ENCODE measurements at regions of chr6 and their contacts with region 1.

Region 1: GRCh38 chr6:164085091-164086075 is 670.9 kb downstream of the QKI start:
- DNase-seq: peak; percentile 81
- H3K4me3 ChIP-seq: no peak overlapping the region
- H3K27ac ChIP-seq: peak overlapping the region; percentile 66
- H3K4me1 ChIP-seq: peaks cover 20% of the 10 kb centered on the region
- H3K27me3 ChIP-seq: no peaks in the 10 kb centered on the region
- CTCF ChIP-seq: no peak
- POLR2A ChIP-seq: no peak

Region 2: DNA sequence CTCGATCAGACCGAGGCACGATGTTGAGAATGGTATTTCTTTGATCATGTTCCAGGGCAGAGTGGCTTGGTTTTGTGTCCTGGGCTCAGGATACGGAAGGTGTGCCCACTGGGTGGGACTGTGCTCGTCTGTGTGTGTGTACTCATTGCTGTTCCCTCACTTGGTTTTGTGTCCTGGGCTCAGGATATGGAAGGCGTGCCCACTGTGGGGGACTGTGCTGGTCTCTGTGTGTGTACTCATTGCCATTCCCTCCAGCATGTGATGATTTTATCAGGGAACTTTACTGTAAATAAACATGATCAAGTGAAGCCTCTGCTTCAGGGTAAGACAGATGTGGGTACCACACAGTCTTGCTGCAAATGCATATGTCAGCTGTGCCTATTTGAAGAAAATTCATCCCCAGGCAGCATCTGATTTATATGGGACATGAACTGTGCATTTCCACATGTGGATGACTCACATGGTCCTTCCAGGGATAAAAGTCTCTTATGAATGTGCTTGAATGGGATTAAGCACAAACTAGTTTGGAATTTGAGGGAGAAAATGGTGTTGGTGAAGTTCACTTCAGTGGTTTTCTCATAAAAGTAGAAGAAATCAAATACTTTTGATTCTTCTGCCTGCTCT is 396.5 kb before region 1 on chr6:
- CTCF ChIA-PET with region 1: no interaction called
- POLR2A ChIA-PET with region 1: no interaction called
- dilution Hi-C with region 1: no loop called
- intact Hi-C with region 1: no loop called
- DNase-seq: no peak
- H3K4me3 ChIP-seq: no peak overlapping the region
- H3K27ac ChIP-seq: no peak overlapping the region
- H3K4me1 ChIP-seq: no peaks in the 10 kb centered on the region
- H3K27me3 ChIP-seq: no peaks in the 10 kb centered on the region
- CTCF ChIP-seq: no peak
- POLR2A ChIP-seq: no peak

Region 3: GRCh38 chr6:163897030-163897429 is 188.4 kb before region 1 on chr6:
- CTCF ChIA-PET with region 1: no interaction called
- POLR2A ChIA-PET with region 1: no interaction called
- dilution Hi-C with region 1: no loop called
- intact Hi-C with region 1: no loop called
- DNase-seq: no peak
- H3K4me3 ChIP-seq: no peak overlapping the region
- H3K27ac ChIP-seq: no peak overlapping the region
- H3K4me1 ChIP-seq: no peaks in the 10 kb centered on the region
- H3K27me3 ChIP-seq: no peaks in the 10 kb centered on the region
- CTCF ChIP-seq: no peak
- POLR2A ChIP-seq: no peak

Region 4: DNA sequence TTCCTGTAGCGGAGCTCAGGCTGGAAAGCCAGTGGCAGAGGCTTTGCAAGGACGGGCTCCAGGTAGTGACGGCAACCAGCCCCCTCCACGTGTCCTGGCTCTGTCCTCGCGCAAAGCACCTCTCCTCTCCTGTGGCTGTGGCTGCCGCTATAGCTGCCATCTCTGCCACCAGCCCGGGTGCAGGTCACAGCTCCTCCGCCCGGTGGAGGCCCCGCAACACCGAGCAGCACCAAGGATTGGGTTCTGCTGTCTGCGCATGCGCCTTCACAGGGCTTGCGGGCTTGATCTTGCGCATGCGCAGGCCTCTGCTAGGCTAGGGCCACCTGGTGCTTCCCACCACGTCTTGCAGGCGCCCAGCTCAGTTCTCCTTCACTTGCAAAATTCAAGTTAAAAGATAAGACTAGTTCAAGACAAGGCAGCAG is 45.4 kb before region 1 on chr6:
- CTCF ChIA-PET with region 1: no interaction called
- POLR2A ChIA-PET with region 1: no interaction called
- dilution Hi-C with region 1: no loop called
- intact Hi-C with region 1: no loop called
- DNase-seq: peak; percentile 58
- H3K4me3 ChIP-seq: peak overlapping the region in 1 of 3 experiments; percentile 27
- H3K27ac ChIP-seq: no peak overlapping the region
- H3K4me1 ChIP-seq: no peaks in the 10 kb centered on the region
- H3K27me3 ChIP-seq: no peaks in the 10 kb centered on the region
- CTCF ChIP-seq: peak in 1 of 2 donors; percentile 8
- POLR2A ChIP-seq: no peak

Region 5: DNA sequence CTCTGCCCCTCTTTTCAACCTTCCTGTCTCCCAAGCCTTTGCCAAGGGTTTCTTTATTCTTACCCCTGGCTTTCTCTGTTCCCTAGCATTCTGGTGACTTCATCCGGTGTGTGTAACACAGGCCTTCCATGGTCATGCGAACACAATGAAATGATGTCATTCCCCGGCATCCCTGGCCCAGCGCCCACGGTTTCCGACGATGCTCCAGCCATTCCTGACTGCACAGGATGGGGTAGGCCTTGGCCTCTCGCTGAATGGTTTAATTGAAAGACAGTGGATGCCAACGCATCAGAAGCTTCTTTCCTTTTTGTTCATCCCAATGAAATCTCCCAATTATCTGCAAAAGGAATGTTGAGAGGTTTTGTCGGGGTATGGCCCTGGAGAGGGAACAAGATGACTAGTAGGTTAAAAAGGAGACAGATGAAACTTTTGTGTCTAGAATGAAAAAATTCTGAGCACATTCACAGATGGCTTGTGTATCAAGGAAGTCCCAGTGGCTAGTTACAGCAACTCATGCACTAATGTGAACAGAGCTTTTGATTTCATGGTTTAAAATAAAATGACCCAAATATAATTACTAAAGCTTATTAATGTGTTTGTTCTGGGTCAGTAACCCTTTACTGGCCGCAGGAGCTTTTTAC is 15.9 kb before region 1 on chr6:
- CTCF ChIA-PET with region 1: interaction called, 5 read pairs
- POLR2A ChIA-PET with region 1: no interaction called
- dilution Hi-C with region 1: no loop called
- intact Hi-C with region 1: loop called (anchors 1 kb)
- DNase-seq: peak; percentile 64
- H3K4me3 ChIP-seq: no peak overlapping the region
- H3K27ac ChIP-seq: peak overlapping the region; percentile 45
- H3K4me1 ChIP-seq: no peaks in the 10 kb centered on the region
- H3K27me3 ChIP-seq: no peaks in the 10 kb centered on the region
- CTCF ChIP-seq: no peak
- POLR2A ChIP-seq: no peak

Measured in endothelial cell of umbilical vein (primary cell).